CD8-positive, alpha-beta T cell (primary cell): ENCODE measurements at regions of chrX and their contacts with region 1.

Region 1: GRCh38 chrX:47193475-47194193 is at the start of gene UBA1:
- DNase-seq: peak; percentile 81 to 98 (median 93)
- ATAC-seq: peak; percentile 73
- H3K4me3 ChIP-seq: peak within 1 kb of the TSS; percentile 78 to 92
- H3K4me3 Mint-ChIP-seq: peak within 1 kb of the TSS; percentile 93
- H3K27ac ChIP-seq: peak within 1 kb of the TSS; percentile 81 to 89
- H3K27ac Mint-ChIP-seq: peak within 1 kb of the TSS; percentile 98
- H3K4me1 ChIP-seq: peaks cover 45% of the 10 kb centered on the region
- H3K4me1 Mint-ChIP-seq: peaks cover 54% of the 10 kb centered on the region
- H3K27me3 ChIP-seq: no peaks in the 10 kb centered on the region
- H3K27me3 Mint-ChIP-seq: no peaks in the 10 kb centered on the region
- CTCF ChIP-seq: peak; percentile 36
- total RNA-seq, gene UBA1: 63.8 to 64.7 TPM

Region 2: GRCh38 chrX:47144626-47145394 is 48.8 kb before region 1 on chrX and contains the starts of genes NDUFB11 and RBM10:
- CTCF ChIA-PET with region 1: no interaction called
- POLR2A ChIA-PET with region 1: interaction called, 11 read pairs
- intact Hi-C with region 1: loop called (anchors 5 kb)
- DNase-seq: peak; percentile 75 to 95 (median 88)
- ATAC-seq: peak; percentile 84
- H3K4me3 ChIP-seq: peak within 1 kb of the TSS; percentile 84 to 87
- H3K4me3 Mint-ChIP-seq: peak within 1 kb of the TSS; percentile 91
- H3K27ac ChIP-seq: peak within 1 kb of the TSS; percentile 82 to 94
- H3K27ac Mint-ChIP-seq: peak within 1 kb of the TSS; percentile 95
- H3K4me1 ChIP-seq: peaks cover 23% of the 10 kb centered on the region
- H3K4me1 Mint-ChIP-seq: peaks cover 45% of the 10 kb centered on the region
- H3K27me3 ChIP-seq: no peaks in the 10 kb centered on the region
- H3K27me3 Mint-ChIP-seq: no peaks in the 10 kb centered on the region
- CTCF ChIP-seq: peak; percentile 52
- total RNA-seq, gene NDUFB11: 50.5 to 51.4 TPM
- total RNA-seq, gene RBM10: 31.9 to 32.0 TPM

Region 3: DNA sequence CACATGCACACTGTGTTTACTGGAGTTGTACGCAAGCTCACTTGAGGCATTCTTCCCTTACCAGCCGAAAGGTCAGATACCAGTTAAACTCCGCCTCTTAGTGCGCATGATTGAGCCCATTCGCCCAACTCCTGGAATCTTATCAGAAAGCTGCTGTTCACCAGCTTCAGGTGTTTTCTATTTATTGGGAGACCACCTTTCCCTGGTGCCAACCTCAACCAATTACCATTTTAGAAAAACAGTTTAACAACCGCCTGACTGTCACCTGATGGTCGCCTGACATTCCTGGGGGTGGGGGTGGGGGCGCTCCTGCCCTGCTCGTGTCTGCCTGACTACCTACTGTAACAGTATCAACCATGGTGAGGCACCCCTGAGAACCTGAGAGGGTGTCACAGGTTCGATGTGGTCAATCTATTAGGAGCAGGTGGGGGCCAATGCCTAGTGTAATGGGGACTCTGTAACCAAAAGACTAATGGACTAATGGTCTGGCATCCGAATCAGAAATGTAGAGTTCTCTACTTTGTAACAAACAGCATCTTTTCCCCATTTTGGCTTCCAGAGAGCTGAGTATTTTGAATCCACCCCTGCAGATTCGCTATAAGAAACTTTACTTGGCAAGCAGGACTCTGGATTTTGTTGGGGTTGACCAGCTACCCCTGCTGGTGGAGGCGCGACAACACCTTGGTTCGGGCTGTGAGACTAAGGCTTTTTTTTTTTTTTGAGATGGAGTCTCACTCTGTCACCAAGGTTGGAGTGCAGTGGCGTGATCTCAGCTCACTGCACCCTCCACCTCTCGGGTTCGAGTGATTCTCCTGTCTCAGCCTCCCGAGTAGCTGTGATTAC is 118.5 kb after region 1 on chrX:
- CTCF ChIA-PET with region 1: no interaction called
- POLR2A ChIA-PET with region 1: no interaction called
- intact Hi-C with region 1: loop called (anchors 1 to 2 kb)
- DNase-seq: peak; percentile 0 to 67 (median 41)
- ATAC-seq: peak; percentile 64
- H3K4me3 ChIP-seq: no peak overlapping the region
- H3K4me3 Mint-ChIP-seq: no peak overlapping the region
- H3K27ac ChIP-seq: no peak overlapping the region
- H3K27ac Mint-ChIP-seq: no peak overlapping the region
- H3K4me1 ChIP-seq: no peaks in the 10 kb centered on the region
- H3K4me1 Mint-ChIP-seq: no peaks in the 10 kb centered on the region
- H3K27me3 ChIP-seq: no peaks in the 10 kb centered on the region
- H3K27me3 Mint-ChIP-seq: no peaks in the 10 kb centered on the region
- CTCF ChIP-seq: peak; percentile 30

Region 4: DNA sequence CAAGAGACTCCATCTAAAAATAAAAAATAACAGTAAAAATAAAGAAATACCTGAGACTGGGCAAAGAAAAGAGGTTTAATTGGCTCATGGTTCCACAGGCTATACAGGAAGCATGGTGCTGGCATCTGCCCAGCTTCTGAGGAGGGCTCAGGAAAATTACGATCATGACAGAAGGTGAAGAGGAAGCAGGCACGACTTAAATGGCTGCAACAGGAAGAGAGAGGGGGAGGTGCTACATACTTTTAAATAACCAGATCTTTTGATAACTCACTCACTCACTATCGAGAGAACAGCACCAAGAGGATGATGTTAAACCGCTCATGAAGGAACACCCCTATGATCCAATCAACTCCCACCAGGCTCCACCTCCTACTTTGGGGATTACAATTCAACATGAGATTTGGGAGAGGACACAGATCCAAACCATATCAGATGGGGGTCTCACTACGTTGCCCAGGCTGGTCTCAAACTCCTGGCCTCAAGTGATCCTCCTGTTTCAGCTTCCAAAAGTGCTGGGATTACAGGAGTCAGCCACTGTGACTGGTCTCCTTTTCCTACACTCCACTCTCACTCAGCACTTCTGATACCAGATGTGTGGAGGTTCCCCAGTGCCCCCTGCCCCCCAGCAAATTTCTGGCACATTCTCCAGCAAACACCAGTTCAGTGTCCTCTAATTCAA is 164.9 kb after region 1 on chrX:
- CTCF ChIA-PET with region 1: no interaction called
- POLR2A ChIA-PET with region 1: no interaction called
- intact Hi-C with region 1: no loop called
- DNase-seq: peak in 7 of 9 experiments; percentile 2 to 65 (median 24)
- ATAC-seq: peak; percentile 29
- H3K4me3 ChIP-seq: no peak overlapping the region
- H3K4me3 Mint-ChIP-seq: peak overlapping the region; percentile 72
- H3K27ac ChIP-seq: peak overlapping the region in 1 of 2 experiments; percentile 50
- H3K27ac Mint-ChIP-seq: peak overlapping the region; percentile 84
- H3K4me1 ChIP-seq: peaks cover 16% of the 10 kb centered on the region
- H3K4me1 Mint-ChIP-seq: peaks cover 22% of the 10 kb centered on the region
- H3K27me3 ChIP-seq: no peaks in the 10 kb centered on the region
- H3K27me3 Mint-ChIP-seq: no peaks in the 10 kb centered on the region
- CTCF ChIP-seq: no peak

Region 5: DNA sequence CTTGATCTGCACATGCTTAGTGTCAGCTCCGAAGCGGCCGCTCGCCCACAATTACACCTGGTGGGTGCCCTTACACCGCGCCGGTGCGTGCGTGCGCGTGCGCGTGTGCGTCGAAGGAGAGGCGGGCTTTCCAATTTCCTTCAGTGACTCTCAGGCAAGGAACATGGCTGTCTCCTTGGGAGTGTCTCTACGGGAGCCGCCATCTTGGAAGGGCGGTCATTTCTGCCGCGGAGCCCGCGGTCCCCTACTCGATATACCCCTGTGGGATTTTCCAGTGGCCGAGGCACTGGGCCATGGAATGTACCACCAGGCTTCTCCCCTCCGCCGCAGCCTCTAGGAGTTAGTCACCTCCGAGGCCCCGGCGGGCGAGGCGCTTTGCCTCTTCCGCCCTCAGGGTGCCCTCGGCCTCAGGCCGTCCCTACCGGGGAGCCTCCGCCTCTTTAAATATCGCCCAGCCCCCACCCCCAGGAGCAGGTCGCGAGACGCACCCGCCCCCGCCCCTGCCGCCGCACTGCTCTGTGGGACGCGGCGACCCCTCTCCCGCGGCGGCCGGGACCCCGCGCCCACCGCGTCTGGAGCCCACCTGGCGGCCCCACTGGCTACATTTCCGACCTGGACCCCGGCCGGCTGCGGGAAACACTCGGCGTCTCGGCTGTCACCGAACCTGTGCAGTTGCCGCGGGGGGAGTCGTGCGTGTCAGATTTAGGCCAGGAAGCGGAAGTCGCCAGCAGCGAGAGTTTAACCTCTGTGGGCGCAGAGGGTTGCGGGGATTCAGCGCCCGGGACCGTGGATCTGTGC is 289.1 kb after region 1 on chrX and contains the start of gene ZNF41:
- CTCF ChIA-PET with region 1: no interaction called
- POLR2A ChIA-PET with region 1: no interaction called
- intact Hi-C with region 1: loop called (anchors 2 kb)
- DNase-seq: peak; percentile 60 to 92 (median 79)
- ATAC-seq: peak; percentile 83
- H3K4me3 ChIP-seq: peak within 1 kb of the TSS; percentile 81 to 86
- H3K4me3 Mint-ChIP-seq: peak within 1 kb of the TSS; percentile 94
- H3K27ac ChIP-seq: peak within 1 kb of the TSS; percentile 81 to 88
- H3K27ac Mint-ChIP-seq: peak within 1 kb of the TSS; percentile 99
- H3K4me1 ChIP-seq: peaks cover 18% of the 10 kb centered on the region
- H3K4me1 Mint-ChIP-seq: peaks cover 42% of the 10 kb centered on the region
- H3K27me3 ChIP-seq: no peaks in the 10 kb centered on the region
- H3K27me3 Mint-ChIP-seq: no peaks in the 10 kb centered on the region
- CTCF ChIP-seq: no peak
- total RNA-seq, gene ZNF41: 2.9 to 4.9 TPM

Region 6: GRCh38 chrX:47650164-47651042 is 456.8 kb after region 1 on chrX and contains the start of gene ELK1:
- CTCF ChIA-PET with region 1: no interaction called
- POLR2A ChIA-PET with region 1: interaction called, 6 read pairs
- intact Hi-C with region 1: loop called (anchors 5 kb)
- DNase-seq: peak; percentile 75 to 96 (median 87)
- ATAC-seq: peak; percentile 89
- H3K4me3 ChIP-seq: peak within 1 kb of the TSS; percentile 63 to 69
- H3K4me3 Mint-ChIP-seq: peak within 1 kb of the TSS; percentile 91
- H3K27ac ChIP-seq: peak within 1 kb of the TSS; percentile 61 to 70
- H3K27ac Mint-ChIP-seq: peak within 1 kb of the TSS; percentile 93
- H3K4me1 ChIP-seq: peaks cover 25% of the 10 kb centered on the region
- H3K4me1 Mint-ChIP-seq: peaks cover 44% of the 10 kb centered on the region
- H3K27me3 ChIP-seq: no peaks in the 10 kb centered on the region
- H3K27me3 Mint-ChIP-seq: no peaks in the 10 kb centered on the region
- CTCF ChIP-seq: no peak
- total RNA-seq, gene ELK1: 33.6 to 41.2 TPM

Region 7: GRCh38 chrX:48021026-48021900 is 827.6 kb after region 1 on chrX:
- CTCF ChIA-PET with region 1: no interaction called
- POLR2A ChIA-PET with region 1: no interaction called
- intact Hi-C with region 1: loop called in 1 of 2 experiments (anchors 5 kb)
- DNase-seq: peak; percentile 51 to 89 (median 76)
- ATAC-seq: peak; percentile 64
- H3K4me3 ChIP-seq: peak overlapping the region; percentile 65 to 74
- H3K4me3 Mint-ChIP-seq: peak overlapping the region; percentile 95
- H3K27ac ChIP-seq: peak overlapping the region; percentile 73 to 95
- H3K27ac Mint-ChIP-seq: peak overlapping the region; percentile 98
- H3K4me1 ChIP-seq: peaks cover 3% of the 10 kb centered on the region
- H3K4me1 Mint-ChIP-seq: peaks cover 15% of the 10 kb centered on the region
- H3K27me3 ChIP-seq: no peaks in the 10 kb centered on the region
- H3K27me3 Mint-ChIP-seq: no peaks in the 10 kb centered on the region
- CTCF ChIP-seq: no peak